Colonic mucosa (tissue), 4 donors: ENCODE measurements at regions of chr11 and their contacts with region 1.

Region 1: GRCh38 chr11:75388386-75389275 is 10.7 kb upstream of the RPS3 start:
- DNase-seq: peak; percentile 79
- H3K4me3 ChIP-seq: no peak overlapping the region
- H3K27ac ChIP-seq: peak overlapping the region; percentile 75
- H3K4me1 ChIP-seq: peaks cover 8% of the 10 kb centered on the region
- H3K27me3 ChIP-seq: no peaks in the 10 kb centered on the region
- CTCF ChIP-seq: peak; percentile 84

Region 2: DNA sequence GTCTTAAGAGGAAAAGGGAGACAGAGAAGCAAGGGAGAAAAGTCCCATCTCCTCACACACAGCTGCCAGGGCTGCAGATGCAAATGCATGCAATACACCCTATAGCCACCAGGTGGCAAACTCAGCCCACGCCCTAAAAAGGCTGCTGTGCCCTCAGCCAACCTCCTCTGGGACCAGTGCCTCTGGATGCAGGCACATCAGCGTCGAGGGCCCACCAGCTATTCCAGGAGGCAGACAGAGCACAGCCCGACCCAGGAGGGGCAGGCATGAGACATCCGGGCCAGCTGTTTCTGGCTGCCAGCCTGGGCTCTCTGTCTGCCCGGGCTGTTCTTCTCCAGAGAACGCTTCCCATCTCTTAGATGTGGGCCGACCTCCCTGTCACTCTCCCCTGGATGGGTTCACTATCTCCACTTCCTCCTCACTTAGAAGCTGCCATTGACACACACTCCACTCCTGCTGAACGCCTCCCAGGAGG is 108.4 kb before region 1 on chr11:
- intact Hi-C with region 1: loop called (anchors 1 kb)
- DNase-seq: peak; percentile 87
- H3K4me3 ChIP-seq: no peak overlapping the region
- H3K27ac ChIP-seq: peak overlapping the region; percentile 55
- H3K4me1 ChIP-seq: no peaks in the 10 kb centered on the region
- H3K27me3 ChIP-seq: no peaks in the 10 kb centered on the region
- CTCF ChIP-seq: peak; percentile 97

Region 3: DNA sequence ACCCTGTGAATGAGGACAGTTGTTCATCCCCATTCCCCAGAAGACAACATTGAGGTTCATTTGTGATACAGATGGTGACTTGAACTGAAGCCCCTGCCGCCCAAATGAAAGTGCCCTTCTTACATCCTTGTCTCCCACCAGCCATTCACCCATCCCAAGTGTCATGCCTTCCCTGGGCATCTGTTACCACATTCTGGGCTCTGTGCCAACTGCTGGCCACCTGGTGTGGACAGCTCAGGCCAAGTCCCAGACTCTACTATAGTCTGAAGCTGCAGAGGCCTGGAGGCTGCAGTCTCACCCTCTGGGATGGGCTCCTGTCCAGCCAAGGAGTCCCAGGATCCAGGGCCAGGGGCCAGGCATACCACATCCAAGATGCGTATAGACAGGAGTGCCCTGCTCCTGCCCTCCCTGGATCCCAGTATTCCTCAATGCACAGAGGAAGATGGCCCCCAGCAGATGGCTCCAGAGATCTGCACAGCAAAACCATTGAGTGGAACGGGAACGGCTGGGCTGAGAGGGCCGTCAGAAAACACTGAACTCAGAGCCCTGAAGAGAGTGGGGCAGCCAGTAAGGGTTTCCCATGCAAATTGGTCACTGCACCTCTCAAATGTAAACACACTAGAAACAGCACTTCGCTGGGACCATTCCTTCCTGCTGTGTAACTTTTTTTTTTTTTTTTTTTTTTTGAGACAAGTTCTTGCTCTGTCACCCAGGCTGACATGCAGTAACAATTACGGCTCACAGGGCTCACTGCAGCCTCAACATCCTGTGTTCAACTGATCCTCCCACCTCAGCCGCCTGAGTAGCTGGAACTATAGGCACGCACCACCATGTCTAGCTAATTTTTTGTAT is 60.0 kb before region 1 on chr11:
- intact Hi-C with region 1: loop called (anchors 2 kb)
- DNase-seq: peak; percentile 88
- H3K4me3 ChIP-seq: no peak overlapping the region
- H3K27ac ChIP-seq: peak overlapping the region; percentile 77
- H3K4me1 ChIP-seq: peaks cover 45% of the 10 kb centered on the region
- H3K27me3 ChIP-seq: no peaks in the 10 kb centered on the region
- CTCF ChIP-seq: peak; percentile 60

Region 4: DNA sequence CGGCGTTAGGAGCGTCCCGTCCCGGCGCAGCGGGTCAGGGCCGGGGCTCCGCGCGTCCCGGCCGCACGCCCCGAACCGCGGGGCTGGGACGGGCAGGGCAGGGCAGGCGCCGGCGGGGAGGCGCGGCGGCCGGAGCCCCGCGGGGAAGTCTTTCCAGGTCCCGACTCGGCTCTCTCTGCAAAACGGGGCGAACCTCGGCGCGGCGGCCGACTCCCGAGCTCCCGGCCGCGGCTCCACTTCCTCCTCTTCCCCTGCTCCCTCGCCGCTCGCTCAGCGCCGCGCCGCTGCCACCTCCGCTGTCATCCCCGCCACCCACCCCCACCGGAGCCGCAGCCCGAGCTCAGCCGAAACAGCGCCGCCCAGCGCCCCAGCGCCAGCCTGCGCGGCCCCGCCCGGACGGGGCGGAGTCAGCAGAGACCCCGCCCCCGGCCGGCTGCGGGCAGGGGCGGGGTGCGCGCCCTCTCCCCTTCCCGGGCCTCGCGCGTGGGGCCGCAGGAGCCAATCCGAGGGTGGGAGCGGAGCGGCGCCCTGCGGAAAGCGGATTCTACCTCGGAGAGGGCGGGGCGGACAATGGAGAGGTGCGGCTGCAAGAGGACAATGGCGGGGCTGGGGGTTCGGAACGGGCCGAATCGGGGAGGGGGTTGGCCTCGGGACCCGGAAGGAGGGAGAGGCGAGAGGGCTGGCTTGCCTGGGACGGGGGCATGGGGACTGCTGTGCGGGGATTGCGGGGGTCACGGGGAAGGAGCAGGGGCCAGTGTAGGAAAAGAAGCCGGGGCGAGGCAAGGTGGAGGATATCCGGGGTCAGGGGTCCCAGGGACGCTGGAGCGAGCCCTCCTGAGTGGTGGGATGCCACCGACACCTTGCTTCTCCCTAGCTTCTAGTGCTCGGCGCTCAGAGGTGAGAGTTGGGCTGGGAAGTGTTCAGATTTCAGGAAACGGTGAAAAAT is 137.2 kb after region 1 on chr11 and contains the start of gene GDPD5:
- intact Hi-C with region 1: loop called (anchors 2 kb)
- DNase-seq: peak; percentile 76
- H3K4me3 ChIP-seq: peak within 1 kb of the TSS; percentile 56
- H3K27ac ChIP-seq: no peak within 1 kb of the TSS
- H3K4me1 ChIP-seq: no peaks in the 10 kb centered on the region
- H3K27me3 ChIP-seq: peaks cover 9% of the 10 kb centered on the region
- CTCF ChIP-seq: peak; percentile 20
- total RNA-seq, gene GDPD5: 2.6 to 4.1 TPM